PC-3 (cell line): ENCODE measurements at regions of chr12 and their contacts with region 1.

Region 1: GRCh38 chr12:109681986-109682707 is 31.5 kb upstream of the FAM222A start:
- DNase-seq: peak; percentile 52
- ATAC-seq: peak; percentile 96
- H3K4me3 ChIP-seq: no peak overlapping the region
- H3K27ac ChIP-seq: peak overlapping the region; percentile 62
- H3K4me1 ChIP-seq: peaks cover 18% of the 10 kb centered on the region
- H3K27me3 ChIP-seq: no peaks in the 10 kb centered on the region
- CTCF ChIP-seq: no peak

Region 2: DNA sequence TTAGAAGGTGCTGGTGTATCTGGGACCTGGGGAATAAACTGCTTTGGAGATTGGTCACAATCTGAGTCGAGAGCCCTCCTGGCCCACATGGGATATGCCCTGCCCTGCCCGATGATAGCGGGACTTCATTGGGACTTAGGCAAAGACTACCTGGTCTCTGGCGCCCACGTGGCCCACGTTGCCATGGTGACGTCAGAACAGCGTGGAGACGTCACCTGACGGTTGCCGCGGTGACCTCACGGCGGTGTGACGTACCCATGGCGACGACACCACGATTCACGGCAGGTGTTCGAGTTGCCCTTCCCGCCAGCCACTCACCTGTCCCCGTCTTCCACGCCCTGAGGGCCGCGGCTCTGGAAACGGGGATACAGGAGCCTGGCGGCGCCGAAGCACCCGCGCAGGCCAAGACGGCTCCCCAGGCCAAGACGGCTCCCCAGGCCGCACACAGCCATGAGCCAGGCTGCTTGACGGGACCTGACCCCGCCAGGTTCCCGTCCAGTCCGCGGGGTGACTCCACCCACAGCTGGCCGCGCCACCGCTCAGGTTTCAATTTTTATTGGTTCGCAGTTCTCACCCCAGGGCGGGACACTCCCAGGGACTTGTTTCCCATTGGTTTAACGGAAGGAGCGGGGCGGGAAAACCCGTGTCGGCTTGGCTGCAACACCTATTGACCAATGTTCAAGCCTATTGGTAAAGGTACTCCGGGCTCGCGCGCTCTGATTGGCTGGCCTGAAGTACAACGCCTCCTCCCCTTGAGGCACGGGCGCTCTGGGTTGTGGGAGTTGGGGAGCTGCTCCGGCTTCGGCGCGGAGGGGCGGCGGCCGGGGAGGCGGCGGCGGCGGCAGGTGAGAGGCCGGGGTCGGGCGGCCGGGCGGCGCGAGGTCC is 108.9 kb before region 1 on chr12 and contains the starts of genes MMAB and MVK:
- CTCF ChIA-PET with region 1: no interaction called
- POLR2A ChIA-PET with region 1: no interaction called
- intact Hi-C with region 1: loop called (anchors 1 kb)
- DNase-seq: peak; percentile 100
- ATAC-seq: peak; percentile 96
- H3K4me3 ChIP-seq: peak within 1 kb of the TSS; percentile 81
- H3K27ac ChIP-seq: peak within 1 kb of the TSS; percentile 57
- H3K4me1 ChIP-seq: peaks cover 16% of the 10 kb centered on the region
- H3K27me3 ChIP-seq: no peaks in the 10 kb centered on the region
- CTCF ChIP-seq: no peak
- total RNA-seq, gene MMAB: 83.0 and 83.5 TPM in 2 replicates
- total RNA-seq, gene MVK: 47.8 and 52.2 TPM in 2 replicates

Region 3: DNA sequence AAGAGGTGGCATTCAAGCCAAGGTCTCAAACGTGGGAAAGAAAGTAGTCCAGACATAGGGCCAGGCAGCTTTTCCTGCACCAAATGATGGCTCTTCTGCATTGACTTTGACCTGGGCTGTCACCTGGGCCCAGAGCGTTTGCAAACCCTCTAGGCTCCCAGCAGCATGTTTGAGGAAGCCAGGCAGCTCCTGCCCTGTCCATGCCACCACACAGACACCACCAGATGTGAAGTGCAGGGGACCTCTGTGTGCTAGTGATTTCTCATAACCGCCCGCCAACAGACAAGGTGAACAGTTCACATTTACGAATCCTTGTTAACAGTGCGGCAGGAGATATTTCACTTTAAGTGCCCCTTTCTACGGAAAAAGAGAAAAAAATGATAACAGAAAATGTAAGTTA is 18.4 kb before region 1 on chr12:
- CTCF ChIA-PET with region 1: no interaction called
- POLR2A ChIA-PET with region 1: no interaction called
- intact Hi-C with region 1: no loop called
- DNase-seq: no peak
- ATAC-seq: no peak
- H3K4me3 ChIP-seq: no peak overlapping the region
- H3K27ac ChIP-seq: no peak overlapping the region
- H3K4me1 ChIP-seq: no peaks in the 10 kb centered on the region
- H3K27me3 ChIP-seq: peaks cover 15% of the 10 kb centered on the region
- CTCF ChIP-seq: no peak